ENCODE measurements at regions of chr14 and their contacts with region 1.

Region 1: DNA sequence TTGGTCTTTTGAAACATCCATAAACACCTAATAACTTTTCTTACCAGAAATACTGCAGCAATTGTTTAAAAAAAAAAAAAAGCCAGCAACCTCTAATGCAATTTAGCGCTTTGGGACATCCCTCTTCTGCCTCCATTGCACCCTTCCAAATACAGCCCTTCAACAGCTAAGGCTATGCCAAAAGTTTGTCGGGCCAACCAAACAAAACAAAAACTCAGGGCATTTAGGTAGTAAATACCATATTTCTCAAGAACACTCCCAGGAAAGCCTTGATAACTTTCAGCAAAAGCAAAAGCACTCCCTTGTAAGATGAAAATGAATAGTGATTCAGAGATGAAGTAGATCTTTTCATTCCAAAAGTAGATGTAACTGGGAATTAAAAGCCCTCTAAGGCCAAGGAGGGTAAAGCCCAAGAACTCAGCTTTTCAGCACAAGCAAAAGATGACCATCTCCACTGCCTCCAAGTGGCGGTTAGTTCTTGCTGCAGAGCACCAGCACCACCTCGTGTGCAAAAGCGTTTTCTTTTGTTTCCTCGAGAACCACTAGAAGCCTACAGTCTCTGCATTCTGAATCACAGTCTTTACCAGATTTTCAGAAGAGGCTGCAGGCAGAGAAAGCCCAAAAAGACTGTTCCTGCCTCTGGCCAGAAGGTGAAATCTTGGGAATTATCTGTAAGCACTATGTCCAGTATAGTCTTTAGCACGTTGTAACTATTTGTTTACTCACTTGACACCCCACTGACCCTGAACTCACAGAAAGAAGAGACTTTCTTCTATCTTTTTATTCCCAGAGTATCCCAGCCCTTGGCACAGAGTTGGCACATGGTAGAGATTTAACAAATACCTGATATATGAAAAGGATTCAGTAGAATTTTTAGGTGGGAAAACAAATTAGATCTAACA is 53.1 kb downstream of the SIX6 start:
- DNase-seq: peak; percentile 47
- H3K4me3 ChIP-seq: no peak overlapping the region
- H3K27ac ChIP-seq: no peak overlapping the region
- H3K4me1 ChIP-seq: no peaks in the 10 kb centered on the region
- H3K27me3 ChIP-seq: no peaks in the 10 kb centered on the region
- CTCF ChIP-seq: peak; percentile 21 to 43

Region 2: GRCh38 chr14:59964251-59965007 is 597.7 kb before region 1 on chr14:
- CTCF ChIA-PET with region 1: no interaction called
- dilution Hi-C with region 1: no loop called
- in situ Hi-C with region 1: no loop called
- intact Hi-C with region 1: loop called (anchors 10 kb)
- DNase-seq: no peak
- H3K4me3 ChIP-seq: no peak overlapping the region
- H3K27ac ChIP-seq: no peak overlapping the region
- H3K4me1 ChIP-seq: no peaks in the 10 kb centered on the region
- H3K27me3 ChIP-seq: peaks cover 2% of the 10 kb centered on the region
- CTCF ChIP-seq: no peak

Region 3: GRCh38 chr14:60184146-60184904 is 377.8 kb before region 1 on chr14:
- CTCF ChIA-PET with region 1: no interaction called
- dilution Hi-C with region 1: no loop called
- in situ Hi-C with region 1: no loop called
- intact Hi-C with region 1: loop called (anchors 1 kb)
- DNase-seq: peak; percentile 39
- H3K4me3 ChIP-seq: peak overlapping the region; percentile 4 to 50 (median 37)
- H3K27ac ChIP-seq: peak overlapping the region; percentile 40
- H3K4me1 ChIP-seq: peaks cover 18% of the 10 kb centered on the region
- H3K27me3 ChIP-seq: no peaks in the 10 kb centered on the region
- CTCF ChIP-seq: peak; percentile 60 to 65

Region 4: GRCh38 chr14:60331201-60332045 is 230.7 kb before region 1 on chr14:
- CTCF ChIA-PET with region 1: no interaction called
- dilution Hi-C with region 1: no loop called
- in situ Hi-C with region 1: loop called in 1 of 2 experiments (anchors 10 kb)
- intact Hi-C with region 1: loop called (anchors 1 kb)
- DNase-seq: no peak
- H3K4me3 ChIP-seq: peak overlapping the region; percentile 14 to 19 (median 18)
- H3K27ac ChIP-seq: no peak overlapping the region
- H3K4me1 ChIP-seq: peaks cover 8% of the 10 kb centered on the region
- H3K27me3 ChIP-seq: peaks cover 9% of the 10 kb centered on the region
- CTCF ChIP-seq: peak; percentile 73 to 76

Region 5: GRCh38 chr14:60616461-60616959 is 54.4 kb after region 1 on chr14:
- CTCF ChIA-PET with region 1: no interaction called
- dilution Hi-C with region 1: no loop called
- in situ Hi-C with region 1: no loop called
- intact Hi-C with region 1: no loop called
- DNase-seq: no peak
- H3K4me3 ChIP-seq: no peak overlapping the region
- H3K27ac ChIP-seq: no peak overlapping the region
- H3K4me1 ChIP-seq: no peaks in the 10 kb centered on the region
- H3K27me3 ChIP-seq: no peaks in the 10 kb centered on the region
- CTCF ChIP-seq: no peak

Region 6: DNA sequence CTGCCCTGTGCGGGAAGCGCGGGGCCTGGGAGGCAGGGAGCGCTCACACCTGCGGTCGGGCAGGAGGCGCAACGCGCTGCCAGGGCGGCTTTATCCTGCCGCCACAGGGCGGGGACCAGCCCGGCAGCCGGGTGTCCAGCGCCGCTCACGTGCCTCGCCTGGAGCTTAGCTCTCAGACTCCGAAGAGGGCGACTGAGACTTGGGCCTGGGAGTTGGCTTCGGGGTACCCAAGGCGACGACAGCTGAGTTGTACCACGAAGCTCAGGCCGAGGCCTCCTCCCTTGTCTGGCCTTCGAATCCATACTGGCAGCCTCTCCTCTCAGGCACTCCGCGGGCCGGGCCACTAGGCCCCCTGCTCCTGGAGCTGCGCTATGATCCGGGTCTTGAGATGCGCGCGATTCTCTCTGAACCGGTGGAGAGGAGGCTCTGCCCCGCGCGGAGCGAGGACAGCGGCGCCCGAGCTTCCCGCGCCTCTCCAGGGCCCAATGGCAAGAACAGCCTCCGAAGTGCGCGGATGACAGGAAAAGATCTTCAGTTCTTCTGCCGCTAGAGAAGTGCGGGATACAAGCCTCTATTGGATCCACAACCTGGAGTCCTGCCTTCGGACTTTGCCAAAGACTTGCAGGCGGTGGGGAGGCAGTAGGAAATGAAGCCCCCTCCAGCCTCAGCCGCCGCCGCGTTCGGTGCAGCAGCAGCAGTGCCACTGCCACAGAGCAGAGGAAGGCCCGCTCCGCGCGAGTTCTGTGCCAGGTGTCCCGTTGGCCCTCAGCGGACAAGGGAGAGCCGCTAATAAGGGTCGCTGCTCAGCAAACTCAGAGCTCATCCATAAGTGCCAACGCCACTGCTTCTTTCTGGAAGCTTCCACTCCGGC is 80.4 kb after region 1 on chr14:
- CTCF ChIA-PET with region 1: no interaction called
- dilution Hi-C with region 1: loop called (anchors 5 kb)
- in situ Hi-C with region 1: no loop called
- intact Hi-C with region 1: no loop called
- DNase-seq: no peak
- H3K4me3 ChIP-seq: no peak overlapping the region
- H3K27ac ChIP-seq: no peak overlapping the region
- H3K4me1 ChIP-seq: peaks cover 11% of the 10 kb centered on the region
- H3K27me3 ChIP-seq: peaks cover 27% of the 10 kb centered on the region
- CTCF ChIP-seq: no peak